ENCODE measurements at regions of chr7 and their contacts with region 1.

Region 1: GRCh38 chr7:51162724-51163329 is 153.8 kb downstream of the COBL start:
- DNase-seq: peak; percentile 16 to 70 (median 54)
- ATAC-seq: peak; percentile 54
- H3K4me3 ChIP-seq: no peak overlapping the region
- H3K4me3 Mint-ChIP-seq: no peak overlapping the region
- H3K27ac ChIP-seq: no peak overlapping the region
- H3K27ac Mint-ChIP-seq: no peak overlapping the region
- H3K4me1 ChIP-seq: no peaks in the 10 kb centered on the region
- H3K4me1 Mint-ChIP-seq: peaks cover 6% of the 10 kb centered on the region
- H3K27me3 ChIP-seq: no peaks in the 10 kb centered on the region
- H3K27me3 Mint-ChIP-seq: peaks cover 19% of the 10 kb centered on the region
- CTCF ChIP-seq: peak; percentile 71

Region 2: DNA sequence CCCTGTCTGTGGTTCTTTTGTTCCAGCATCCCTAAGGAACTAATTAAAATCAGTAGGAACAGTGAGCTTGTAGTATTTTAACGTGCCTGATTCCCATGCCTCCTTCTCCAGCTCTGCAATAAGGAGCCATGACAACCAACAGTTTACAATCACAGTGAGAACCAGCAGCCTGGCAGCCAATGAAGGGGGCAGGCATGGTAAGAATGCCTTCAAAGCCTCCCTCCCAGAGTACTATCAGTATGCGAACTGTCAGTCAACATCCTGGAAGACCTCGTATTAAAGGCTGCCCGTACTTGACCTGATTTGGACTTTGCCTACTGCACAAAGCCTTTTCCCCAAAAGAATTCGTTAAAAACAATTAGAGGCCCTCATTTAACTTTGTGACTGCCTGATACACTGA is 1077.5 kb before region 1 on chr7:
- CTCF ChIA-PET with region 1: no interaction called
- POLR2A ChIA-PET with region 1: no interaction called
- intact Hi-C with region 1: loop called in 1 of 2 experiments (anchors 2 kb)
- DNase-seq: no peak
- ATAC-seq: no peak
- H3K4me3 ChIP-seq: no peak overlapping the region
- H3K4me3 Mint-ChIP-seq: no peak overlapping the region
- H3K27ac ChIP-seq: no peak overlapping the region
- H3K27ac Mint-ChIP-seq: no peak overlapping the region
- H3K4me1 ChIP-seq: no peaks in the 10 kb centered on the region
- H3K4me1 Mint-ChIP-seq: no peaks in the 10 kb centered on the region
- H3K27me3 ChIP-seq: no peaks in the 10 kb centered on the region
- H3K27me3 Mint-ChIP-seq: no peaks in the 10 kb centered on the region
- CTCF ChIP-seq: no peak

Region 3: DNA sequence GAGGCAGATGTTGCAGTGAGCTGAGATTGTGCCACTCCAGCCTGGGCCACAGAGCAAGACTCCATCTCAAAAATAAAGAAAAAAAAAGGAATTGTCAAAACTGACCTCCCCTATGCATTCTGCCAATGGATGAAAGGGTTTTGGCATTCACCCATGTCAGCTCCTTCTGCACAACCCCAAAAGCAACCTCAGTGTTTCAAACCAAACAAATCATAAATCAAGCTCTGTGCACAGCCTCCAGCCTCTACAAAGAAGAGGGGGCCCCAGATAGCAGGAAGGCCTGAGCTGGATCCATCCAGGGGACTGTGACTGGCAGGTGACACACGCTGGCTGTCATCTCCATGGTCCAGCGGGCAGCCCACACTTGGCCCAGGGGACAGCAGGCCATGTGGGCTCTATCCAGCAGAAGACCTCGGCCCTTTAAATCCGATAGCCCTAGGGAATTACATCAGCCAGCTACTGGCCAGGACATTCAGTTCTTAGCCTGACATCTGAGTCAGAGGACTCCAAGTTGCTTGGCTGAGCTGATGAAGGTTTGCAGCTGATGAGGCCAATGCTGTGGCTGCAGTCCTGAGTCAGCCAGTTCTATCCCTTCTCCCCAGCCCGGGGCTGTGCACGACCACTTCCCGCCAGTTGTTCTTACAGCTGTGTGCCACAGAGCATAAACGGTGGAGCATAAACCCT is 660.7 kb before region 1 on chr7:
- CTCF ChIA-PET with region 1: no interaction called
- POLR2A ChIA-PET with region 1: no interaction called
- intact Hi-C with region 1: no loop called
- DNase-seq: no peak
- ATAC-seq: no peak
- H3K4me3 ChIP-seq: no peak overlapping the region
- H3K4me3 Mint-ChIP-seq: no peak overlapping the region
- H3K27ac ChIP-seq: no peak overlapping the region
- H3K27ac Mint-ChIP-seq: no peak overlapping the region
- H3K4me1 ChIP-seq: no peaks in the 10 kb centered on the region
- H3K4me1 Mint-ChIP-seq: no peaks in the 10 kb centered on the region
- H3K27me3 ChIP-seq: no peaks in the 10 kb centered on the region
- H3K27me3 Mint-ChIP-seq: peaks cover 21% of the 10 kb centered on the region
- CTCF ChIP-seq: no peak

Region 4: GRCh38 chr7:50610521-50611277 is 552.1 kb before region 1 on chr7:
- CTCF ChIA-PET with region 1: interaction called, 7 read pairs
- POLR2A ChIA-PET with region 1: no interaction called
- intact Hi-C with region 1: loop called in 1 of 2 experiments (anchors 5 kb)
- DNase-seq: peak; percentile 17 to 81 (median 60)
- ATAC-seq: peak; percentile 84
- H3K4me3 ChIP-seq: no peak overlapping the region
- H3K4me3 Mint-ChIP-seq: peak overlapping the region; percentile 21
- H3K27ac ChIP-seq: peak overlapping the region; percentile 39 to 53
- H3K27ac Mint-ChIP-seq: peak overlapping the region; percentile 68
- H3K4me1 ChIP-seq: peaks cover 18% of the 10 kb centered on the region
- H3K4me1 Mint-ChIP-seq: peaks cover 39% of the 10 kb centered on the region
- H3K27me3 ChIP-seq: no peaks in the 10 kb centered on the region
- H3K27me3 Mint-ChIP-seq: no peaks in the 10 kb centered on the region
- CTCF ChIP-seq: no peak

Region 5: GRCh38 chr7:50696810-50697582 is 465.8 kb before region 1 on chr7:
- CTCF ChIA-PET with region 1: no interaction called
- POLR2A ChIA-PET with region 1: no interaction called
- intact Hi-C with region 1: loop called in 1 of 2 experiments (anchors 2 kb)
- DNase-seq: peak in 3 of 9 experiments; percentile 23 to 41 (median 30)
- ATAC-seq: no peak
- H3K4me3 ChIP-seq: no peak overlapping the region
- H3K4me3 Mint-ChIP-seq: no peak overlapping the region
- H3K27ac ChIP-seq: no peak overlapping the region
- H3K27ac Mint-ChIP-seq: no peak overlapping the region
- H3K4me1 ChIP-seq: no peaks in the 10 kb centered on the region
- H3K4me1 Mint-ChIP-seq: peaks cover 6% of the 10 kb centered on the region
- H3K27me3 ChIP-seq: no peaks in the 10 kb centered on the region
- H3K27me3 Mint-ChIP-seq: no peaks in the 10 kb centered on the region
- CTCF ChIP-seq: peak; percentile 47

Region 6: DNA sequence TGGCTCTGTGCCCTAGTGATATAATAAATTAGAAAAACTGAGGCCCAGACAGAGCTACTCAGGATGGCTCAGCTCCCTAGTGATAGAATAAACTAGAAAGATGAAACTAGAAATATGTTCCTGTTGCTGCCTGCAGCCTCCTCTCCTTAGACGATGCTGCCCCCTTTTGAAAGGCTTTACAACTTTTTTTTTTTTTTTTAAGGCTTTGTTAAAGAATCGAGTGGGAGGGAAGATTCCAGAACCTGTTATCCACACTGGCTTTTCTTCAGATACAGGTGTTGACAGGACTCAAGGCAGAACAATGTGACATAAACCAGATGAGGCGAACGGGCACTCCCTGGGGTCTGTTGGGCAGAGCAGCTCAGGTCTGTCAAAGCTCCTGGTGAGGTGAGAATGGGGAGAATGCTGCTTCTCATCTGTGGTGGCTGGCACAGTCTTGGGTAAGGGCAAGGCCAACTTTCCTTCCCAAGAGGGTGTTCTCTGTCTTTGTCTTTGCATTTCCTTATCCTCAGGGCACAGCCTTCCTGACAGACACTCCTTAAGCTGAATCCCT is 21.3 kb before region 1 on chr7:
- CTCF ChIA-PET with region 1: interaction called, 74 read pairs
- POLR2A ChIA-PET with region 1: no interaction called
- intact Hi-C with region 1: no loop called
- DNase-seq: peak in 2 of 9 experiments; percentile 12 to 21
- ATAC-seq: no peak
- H3K4me3 ChIP-seq: no peak overlapping the region
- H3K4me3 Mint-ChIP-seq: no peak overlapping the region
- H3K27ac ChIP-seq: no peak overlapping the region
- H3K27ac Mint-ChIP-seq: no peak overlapping the region
- H3K4me1 ChIP-seq: no peaks in the 10 kb centered on the region
- H3K4me1 Mint-ChIP-seq: no peaks in the 10 kb centered on the region
- H3K27me3 ChIP-seq: no peaks in the 10 kb centered on the region
- H3K27me3 Mint-ChIP-seq: no peaks in the 10 kb centered on the region
- CTCF ChIP-seq: no peak

Region 7: GRCh38 chr7:51151455-51151854 is 11.4 kb before region 1 on chr7:
- CTCF ChIA-PET with region 1: interaction called, 74 read pairs
- POLR2A ChIA-PET with region 1: no interaction called
- intact Hi-C with region 1: no loop called
- DNase-seq: no peak
- ATAC-seq: no peak
- H3K4me3 ChIP-seq: no peak overlapping the region
- H3K4me3 Mint-ChIP-seq: no peak overlapping the region
- H3K27ac ChIP-seq: no peak overlapping the region
- H3K27ac Mint-ChIP-seq: no peak overlapping the region
- H3K4me1 ChIP-seq: no peaks in the 10 kb centered on the region
- H3K4me1 Mint-ChIP-seq: no peaks in the 10 kb centered on the region
- H3K27me3 ChIP-seq: no peaks in the 10 kb centered on the region
- H3K27me3 Mint-ChIP-seq: peaks cover 7% of the 10 kb centered on the region
- CTCF ChIP-seq: no peak

Region 8: DNA sequence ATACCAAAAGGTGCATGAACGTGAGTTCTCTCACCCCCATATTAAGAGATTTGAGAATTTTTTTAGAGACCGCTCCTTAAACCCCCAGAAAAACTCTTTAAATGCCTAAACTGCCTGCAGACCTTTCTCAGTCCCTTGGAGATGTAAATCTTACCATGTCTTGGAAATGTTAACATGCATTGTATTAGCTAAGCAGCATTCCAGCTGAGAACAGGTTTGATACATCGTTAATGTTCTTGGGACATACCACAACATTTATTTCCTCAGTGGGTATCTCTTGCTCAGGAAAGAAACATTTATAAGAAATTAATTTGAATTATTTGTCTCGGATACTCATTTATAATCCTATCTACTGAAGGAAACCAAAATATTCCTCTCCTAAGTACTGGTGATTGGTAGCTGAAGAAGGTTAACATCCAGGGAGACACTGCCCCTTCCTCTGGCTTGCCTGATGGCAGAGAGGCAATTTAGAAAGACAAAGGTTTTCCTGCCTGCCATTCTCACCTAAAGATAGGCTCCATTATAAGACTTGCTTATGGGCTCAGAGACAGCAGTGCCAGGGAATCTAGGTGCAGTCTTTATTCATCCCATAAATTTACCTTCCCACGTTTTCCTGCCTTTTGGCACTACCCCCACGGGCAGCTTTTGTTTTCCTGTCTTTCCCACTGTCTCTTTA is 12.6 kb after region 1 on chr7:
- CTCF ChIA-PET with region 1: interaction called, 12 read pairs
- POLR2A ChIA-PET with region 1: interaction called, 3 read pairs
- intact Hi-C with region 1: no loop called
- DNase-seq: no peak
- ATAC-seq: no peak
- H3K4me3 ChIP-seq: no peak overlapping the region
- H3K4me3 Mint-ChIP-seq: no peak overlapping the region
- H3K27ac ChIP-seq: no peak overlapping the region
- H3K27ac Mint-ChIP-seq: no peak overlapping the region
- H3K4me1 ChIP-seq: no peaks in the 10 kb centered on the region
- H3K4me1 Mint-ChIP-seq: no peaks in the 10 kb centered on the region
- H3K27me3 ChIP-seq: no peaks in the 10 kb centered on the region
- H3K27me3 Mint-ChIP-seq: peaks cover 4% of the 10 kb centered on the region
- CTCF ChIP-seq: no peak

Region 9: GRCh38 chr7:51242007-51242691 is 79.3 kb after region 1 on chr7:
- CTCF ChIA-PET with region 1: no interaction called
- POLR2A ChIA-PET with region 1: no interaction called
- intact Hi-C with region 1: no loop called
- DNase-seq: no peak
- ATAC-seq: no peak
- H3K4me3 ChIP-seq: no peak overlapping the region
- H3K4me3 Mint-ChIP-seq: no peak overlapping the region
- H3K27ac ChIP-seq: no peak overlapping the region
- H3K27ac Mint-ChIP-seq: no peak overlapping the region
- H3K4me1 ChIP-seq: no peaks in the 10 kb centered on the region
- H3K4me1 Mint-ChIP-seq: no peaks in the 10 kb centered on the region
- H3K27me3 ChIP-seq: no peaks in the 10 kb centered on the region
- H3K27me3 Mint-ChIP-seq: peaks cover 2% of the 10 kb centered on the region
- CTCF ChIP-seq: no peak

Measured in CD8-positive, alpha-beta T cell (primary cell).